ENCODE measurements at regions of chr3 and their contacts with region 1.

Region 1: DNA sequence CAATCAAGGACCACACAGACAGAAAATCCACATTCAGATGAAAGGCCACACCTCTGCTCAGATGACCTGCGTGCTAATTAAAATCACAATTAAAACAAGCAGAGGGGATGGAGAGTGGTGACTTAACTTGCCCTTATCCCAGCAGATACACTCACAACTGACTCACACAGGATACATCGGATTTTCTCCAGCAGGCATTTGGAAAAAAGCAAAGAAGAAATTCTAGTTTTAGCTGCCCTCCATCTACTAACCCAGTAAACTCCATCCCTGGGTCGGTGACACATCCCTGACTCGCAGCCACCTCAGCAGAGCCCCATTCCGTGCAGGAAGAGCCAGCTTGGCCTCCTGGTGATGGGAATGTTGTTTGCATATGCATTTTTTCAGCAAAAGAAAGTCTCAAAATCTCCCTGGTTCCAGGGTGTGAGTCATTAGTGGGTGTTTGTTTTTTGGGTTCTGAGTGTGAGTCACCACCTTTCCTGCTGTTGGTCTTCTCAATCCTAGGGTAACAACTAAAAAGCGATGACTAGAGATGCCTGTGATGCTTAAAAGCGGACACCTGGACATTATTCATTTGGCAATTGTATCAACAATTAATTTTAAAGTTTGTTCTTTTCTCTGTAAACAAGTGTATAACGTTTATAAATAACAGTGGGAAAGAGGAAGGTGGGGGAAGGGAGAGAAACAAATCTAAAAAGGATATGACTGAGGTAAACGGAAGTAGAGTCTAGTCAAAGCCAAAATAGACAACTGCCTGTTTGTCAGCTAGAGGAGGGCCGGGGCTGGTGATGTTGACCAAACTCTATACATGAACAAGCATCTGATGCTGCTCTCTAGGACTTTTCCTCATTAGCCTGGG is 49.8 kb upstream of the SLC4A7 start:
- DNase-seq: peak; percentile 88
- ATAC-seq: peak; percentile 93
- H3K4me3 ChIP-seq: peak overlapping the region in 1 of 3 experiments; percentile 19; a peak in 2 of 6 replicates
- H3K27ac ChIP-seq: peak overlapping the region; percentile 19
- H3K4me1 ChIP-seq: peaks cover 71% of the 10 kb centered on the region
- H3K27me3 ChIP-seq: no peaks in the 10 kb centered on the region
- CTCF ChIP-seq: peak; percentile 39
- EP300 ChIP-seq: peak in 1 of 2 experiments; percentile 74; a peak in 2 of 4 replicates
- POLR2A ChIP-seq: no peak
- RAD21 ChIP-seq: no peak

Region 2: GRCh38 chr3:27681245-27681748 is 147.4 kb after region 1 on chr3:
- CTCF ChIA-PET with region 1: no interaction called
- POLR2A ChIA-PET with region 1: no interaction called
- in situ Hi-C with region 1: no loop called
- intact Hi-C with region 1: loop called (anchors 5 kb)
- DNase-seq: peak; percentile 74
- ATAC-seq: peak; percentile 69
- H3K4me3 ChIP-seq: peak overlapping the region; percentile 48 to 62 (median 51); a peak in 4 of 6 replicates
- H3K27ac ChIP-seq: peak overlapping the region; percentile 60
- H3K4me1 ChIP-seq: peaks cover 37% of the 10 kb centered on the region
- H3K27me3 ChIP-seq: no peaks in the 10 kb centered on the region
- CTCF ChIP-seq: peak; percentile 69
- EP300 ChIP-seq: no peak
- POLR2A ChIP-seq: no peak
- RAD21 ChIP-seq: peak; percentile 31; the same call in 1 of the 2 replicates